Psoas muscle (tissue), 8 donors: ENCODE measurements at regions of chr5 and their contacts with region 1.

Region 1: GRCh38 chr5:179777909-179778308 is 15.9 kb upstream of the LTC4S start:
- DNase-seq: peak in 1 of 2 donors; percentile 14
- ATAC-seq: no peak
- H3K4me3 ChIP-seq: no peak overlapping the region
- H3K27ac ChIP-seq: no peak overlapping the region
- H3K4me1 ChIP-seq: no peaks in the 10 kb centered on the region
- H3K27me3 ChIP-seq: no peaks in the 10 kb centered on the region
- CTCF ChIP-seq: no peak

Region 2: GRCh38 chr5:179738742-179739141 is 39.2 kb before region 1 on chr5:
- intact Hi-C with region 1: loop called in 1 of 2 experiments (anchors 1 kb)
- DNase-seq: no peak
- ATAC-seq: no peak
- H3K4me3 ChIP-seq: no peak overlapping the region
- H3K27ac ChIP-seq: no peak overlapping the region
- H3K4me1 ChIP-seq: peaks cover 46% of the 10 kb centered on the region
- H3K27me3 ChIP-seq: no peaks in the 10 kb centered on the region
- CTCF ChIP-seq: no peak

Region 3: GRCh38 chr5:180034564-180034963 is 256.7 kb after region 1 on chr5:
- intact Hi-C with region 1: no loop called
- DNase-seq: no peak
- ATAC-seq: no peak
- H3K4me3 ChIP-seq: no peak overlapping the region
- H3K27ac ChIP-seq: no peak overlapping the region
- H3K4me1 ChIP-seq: no peaks in the 10 kb centered on the region
- H3K27me3 ChIP-seq: no peaks in the 10 kb centered on the region
- CTCF ChIP-seq: no peak